MCF 10A (cell line): ENCODE measurements at regions of chr22 and their contacts with region 1.

Region 1: GRCh38 chr22:36528795-36529751 is at the start of gene EIF3D:
- DNase-seq: peak; percentile 99
- H3K4me3 Mint-ChIP-seq: peak within 1 kb of the TSS; percentile 87
- H3K27ac Mint-ChIP-seq: peak within 1 kb of the TSS; percentile 95
- H3K4me1 Mint-ChIP-seq: peaks cover 5% of the 10 kb centered on the region
- H3K27me3 Mint-ChIP-seq: no peaks in the 10 kb centered on the region
- CTCF ChIP-seq: no peak
- total RNA-seq, gene EIF3D: 258 and 306 TPM in 2 replicates

Region 2: DNA sequence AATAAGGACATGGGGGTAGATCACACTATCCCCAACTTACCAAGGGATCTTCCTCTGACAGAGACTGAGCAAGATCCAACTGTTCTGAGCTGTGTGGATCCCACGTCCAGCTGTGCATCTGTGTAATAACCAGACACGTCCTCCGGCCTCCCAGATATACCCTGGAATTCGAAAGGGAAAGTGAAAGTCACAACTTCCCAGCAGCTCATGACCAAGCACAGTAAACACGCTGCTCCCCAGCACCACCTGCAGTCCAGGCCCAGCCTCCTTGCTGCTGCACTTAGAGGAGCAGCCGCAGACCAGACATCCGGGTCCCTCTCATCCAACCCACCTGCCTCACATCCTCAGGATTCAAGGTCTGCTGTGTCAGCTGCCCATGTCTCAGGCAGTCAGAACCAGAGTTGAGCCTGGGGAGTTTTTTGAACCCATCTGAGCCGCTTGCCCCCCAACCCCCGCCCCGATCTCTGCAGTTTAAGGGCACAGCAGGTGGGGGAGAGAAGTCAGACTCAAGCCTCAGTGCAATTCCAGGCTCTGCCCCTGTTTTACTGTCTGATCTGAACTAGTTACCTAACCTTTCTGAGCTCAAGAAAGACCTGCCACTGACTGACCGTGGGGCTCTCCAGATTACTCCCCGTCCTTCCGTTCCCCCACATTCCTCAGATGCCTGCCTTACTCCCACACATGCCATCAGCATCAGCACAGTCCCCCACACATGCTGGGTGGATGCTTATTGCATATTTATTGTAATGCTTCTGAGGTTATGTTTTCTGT is 289.5 kb before region 1 on chr22 and contains the start of gene APOL2:
- CTCF ChIA-PET with region 1: no interaction called
- POLR2A ChIA-PET with region 1: no interaction called
- intact Hi-C with region 1: no loop called
- DNase-seq: peak; percentile 92
- H3K4me3 Mint-ChIP-seq: peak within 1 kb of the TSS; percentile 97
- H3K27ac Mint-ChIP-seq: peak within 1 kb of the TSS; percentile 97
- H3K4me1 Mint-ChIP-seq: peaks cover 28% of the 10 kb centered on the region
- H3K27me3 Mint-ChIP-seq: no peaks in the 10 kb centered on the region
- CTCF ChIP-seq: peak; percentile 36
- total RNA-seq, gene APOL2: 16.0 and 38.7 TPM in 2 replicates

Region 3: GRCh38 chr22:36506637-36507517 is 22.2 kb before region 1 on chr22 and contains the start of gene FOXRED2:
- CTCF ChIA-PET with region 1: interaction called, 8 read pairs
- POLR2A ChIA-PET with region 1: interaction called, 38 read pairs
- intact Hi-C with region 1: loop called (anchors 2 kb)
- DNase-seq: peak; percentile 81
- H3K4me3 Mint-ChIP-seq: peak within 1 kb of the TSS; percentile 77
- H3K27ac Mint-ChIP-seq: peak within 1 kb of the TSS; percentile 49
- H3K4me1 Mint-ChIP-seq: peaks cover 13% of the 10 kb centered on the region
- H3K27me3 Mint-ChIP-seq: no peaks in the 10 kb centered on the region
- CTCF ChIP-seq: no peak
- total RNA-seq, gene FOXRED2: 10.9 and 11.4 TPM in 2 replicates

Region 4: GRCh38 chr22:36587289-36588154 is 58.4 kb after region 1 on chr22:
- CTCF ChIA-PET with region 1: no interaction called
- POLR2A ChIA-PET with region 1: interaction called, 13 read pairs
- intact Hi-C with region 1: no loop called
- DNase-seq: peak; percentile 27
- H3K4me3 Mint-ChIP-seq: peak overlapping the region; percentile 12
- H3K27ac Mint-ChIP-seq: no peak overlapping the region
- H3K4me1 Mint-ChIP-seq: peaks cover 30% of the 10 kb centered on the region
- H3K27me3 Mint-ChIP-seq: peaks cover 29% of the 10 kb centered on the region
- CTCF ChIP-seq: no peak

Region 5: GRCh38 chr22:36628571-36629065 is 99.5 kb after region 1 on chr22:
- CTCF ChIA-PET with region 1: no interaction called
- POLR2A ChIA-PET with region 1: no interaction called
- intact Hi-C with region 1: no loop called
- DNase-seq: no peak
- H3K4me3 Mint-ChIP-seq: no peak overlapping the region
- H3K27ac Mint-ChIP-seq: no peak overlapping the region
- H3K4me1 Mint-ChIP-seq: no peaks in the 10 kb centered on the region
- H3K27me3 Mint-ChIP-seq: peaks cover 18% of the 10 kb centered on the region
- CTCF ChIP-seq: no peak

Region 6: DNA sequence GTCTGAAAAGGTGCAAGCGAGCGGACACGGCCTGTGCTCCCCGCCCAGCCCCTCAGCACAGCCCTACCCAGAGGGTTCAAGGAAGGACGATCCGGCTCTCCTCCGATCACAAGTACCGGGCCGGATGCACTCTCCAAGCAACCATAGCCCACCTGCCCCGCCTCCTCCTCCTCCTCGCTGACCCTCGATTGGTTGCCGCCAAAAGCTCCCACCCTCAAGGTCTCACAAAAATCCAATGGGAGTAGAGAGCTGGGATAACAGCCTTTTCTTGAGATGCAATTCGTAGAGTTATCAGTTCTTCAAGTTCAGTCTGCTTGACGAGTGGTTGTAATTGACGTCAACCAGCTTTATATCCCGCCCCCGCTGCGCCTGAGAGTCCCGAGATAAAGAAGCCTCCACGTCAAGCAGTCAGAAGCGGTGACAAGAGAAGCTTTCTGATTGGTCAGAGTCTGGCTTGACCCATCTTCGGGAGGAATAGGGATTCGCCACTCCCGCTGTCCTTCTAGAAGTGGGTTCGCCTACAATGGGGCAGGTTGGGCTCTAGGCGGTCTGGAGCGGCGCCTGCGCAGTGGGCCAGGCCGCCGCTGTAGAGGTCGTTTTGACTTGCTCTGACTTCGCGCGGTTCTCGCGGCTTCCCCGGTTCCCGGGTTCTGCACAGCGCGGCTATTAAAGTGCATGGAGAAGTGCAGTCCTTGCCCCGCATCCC is 247.0 kb after region 1 on chr22 and contains the start of gene IFT27:
- CTCF ChIA-PET with region 1: interaction called, 3 read pairs
- POLR2A ChIA-PET with region 1: interaction called, 25 read pairs
- intact Hi-C with region 1: no loop called
- DNase-seq: peak; percentile 100
- H3K4me3 Mint-ChIP-seq: peak within 1 kb of the TSS; percentile 84
- H3K27ac Mint-ChIP-seq: peak within 1 kb of the TSS; percentile 79
- H3K4me1 Mint-ChIP-seq: peaks cover 6% of the 10 kb centered on the region
- H3K27me3 Mint-ChIP-seq: no peaks in the 10 kb centered on the region
- CTCF ChIP-seq: no peak
- total RNA-seq, gene IFT27: 17.6 and 28.7 TPM in 2 replicates